Left ventricle myocardium superior (tissue), 1 donor: ENCODE measurements at regions of chr2 and their contacts with region 1.

Region 1: DNA sequence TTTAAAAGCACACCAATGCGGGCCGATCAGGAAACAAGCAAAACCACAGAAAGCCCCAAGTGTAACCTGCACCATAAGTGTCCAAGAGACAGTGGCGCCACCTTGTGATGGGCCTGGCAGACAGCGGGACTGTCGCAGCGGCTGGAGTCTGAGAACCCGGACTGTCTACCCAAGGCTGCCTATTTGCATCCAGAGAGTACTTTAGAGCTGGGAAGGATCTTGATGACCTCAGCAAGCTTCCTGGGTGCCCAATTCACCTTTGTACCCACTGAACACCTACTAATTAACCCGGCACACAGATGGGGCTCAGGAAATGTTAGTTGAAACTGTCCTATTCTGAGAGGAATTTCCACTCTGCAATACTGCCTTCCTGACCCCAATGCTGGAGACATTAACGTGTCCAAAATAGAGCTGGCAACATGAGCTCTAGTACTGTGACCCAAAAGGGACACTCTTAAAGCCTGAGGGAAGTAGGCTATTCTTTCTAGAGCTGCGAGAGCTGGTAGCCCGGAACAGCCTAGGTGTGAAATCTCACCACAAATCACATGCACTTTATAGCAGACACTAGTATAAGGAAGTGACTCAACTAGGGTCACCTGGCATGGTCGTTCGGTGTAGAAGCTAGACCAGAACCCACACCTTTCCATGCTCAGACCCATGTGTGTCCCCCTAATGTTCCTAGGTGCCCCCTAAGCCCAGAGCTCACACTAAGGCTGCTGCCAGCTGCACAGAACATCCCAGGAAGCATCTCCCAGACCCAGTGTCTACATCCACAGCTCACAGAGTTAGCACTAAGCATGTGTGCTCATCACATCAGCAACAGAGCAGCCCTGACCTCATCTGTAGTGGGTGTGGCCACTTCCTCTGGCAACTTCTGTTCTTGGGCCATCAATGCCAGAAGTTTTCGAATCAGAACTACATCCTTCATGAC is 25.4 kb downstream of the POLR1A start:
- DNase-seq: peak; percentile 87
- ATAC-seq: peak; percentile 88

Region 2: GRCh38 chr2:85826990-85827878 is 253.0 kb before region 1 on chr2:
- intact Hi-C with region 1: loop called (anchors 5 kb)
- DNase-seq: peak; percentile 89
- ATAC-seq: peak; percentile 97

Region 3: DNA sequence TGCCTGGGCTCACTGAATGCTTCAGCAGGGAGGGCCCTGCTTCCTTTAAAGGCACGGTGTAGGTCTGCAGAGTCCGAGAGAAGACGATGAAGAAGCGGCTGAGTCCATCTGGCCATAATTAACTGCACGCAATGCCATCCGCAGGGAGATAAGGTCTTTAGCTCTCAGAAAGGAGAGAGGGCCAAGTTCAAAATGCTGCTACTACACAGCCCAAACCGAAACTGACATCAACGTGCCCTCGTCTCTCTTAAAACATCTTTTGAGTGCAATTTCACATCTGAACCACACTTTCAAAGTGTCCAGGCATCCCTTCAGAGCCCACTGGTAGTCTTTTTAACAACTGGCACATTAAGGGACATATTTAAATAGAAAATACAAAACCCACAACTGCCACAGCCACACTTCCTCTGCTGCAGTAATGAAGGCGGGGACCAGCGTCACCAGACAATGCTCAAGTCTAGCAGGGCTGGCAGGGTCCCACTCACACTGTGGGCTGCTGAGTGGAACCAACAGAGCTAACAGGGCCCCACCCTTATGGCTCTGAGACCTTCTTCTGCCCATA is 227.2 kb before region 1 on chr2:
- intact Hi-C with region 1: no loop called
- DNase-seq: peak; percentile 44
- ATAC-seq: peak; percentile 67